ENCODE measurements at regions of chr1 and their contacts with region 1.

Region 1: GRCh38 chr1:182054698-182055326 is 6.7 kb downstream of the ZNF648 start:
- DNase-seq: peak; percentile 24
- H3K4me3 Mint-ChIP-seq: no peak overlapping the region
- H3K27ac Mint-ChIP-seq: no peak overlapping the region
- H3K4me1 Mint-ChIP-seq: peaks cover 7% of the 10 kb centered on the region
- H3K27me3 Mint-ChIP-seq: peaks cover 12% of the 10 kb centered on the region

Region 2: DNA sequence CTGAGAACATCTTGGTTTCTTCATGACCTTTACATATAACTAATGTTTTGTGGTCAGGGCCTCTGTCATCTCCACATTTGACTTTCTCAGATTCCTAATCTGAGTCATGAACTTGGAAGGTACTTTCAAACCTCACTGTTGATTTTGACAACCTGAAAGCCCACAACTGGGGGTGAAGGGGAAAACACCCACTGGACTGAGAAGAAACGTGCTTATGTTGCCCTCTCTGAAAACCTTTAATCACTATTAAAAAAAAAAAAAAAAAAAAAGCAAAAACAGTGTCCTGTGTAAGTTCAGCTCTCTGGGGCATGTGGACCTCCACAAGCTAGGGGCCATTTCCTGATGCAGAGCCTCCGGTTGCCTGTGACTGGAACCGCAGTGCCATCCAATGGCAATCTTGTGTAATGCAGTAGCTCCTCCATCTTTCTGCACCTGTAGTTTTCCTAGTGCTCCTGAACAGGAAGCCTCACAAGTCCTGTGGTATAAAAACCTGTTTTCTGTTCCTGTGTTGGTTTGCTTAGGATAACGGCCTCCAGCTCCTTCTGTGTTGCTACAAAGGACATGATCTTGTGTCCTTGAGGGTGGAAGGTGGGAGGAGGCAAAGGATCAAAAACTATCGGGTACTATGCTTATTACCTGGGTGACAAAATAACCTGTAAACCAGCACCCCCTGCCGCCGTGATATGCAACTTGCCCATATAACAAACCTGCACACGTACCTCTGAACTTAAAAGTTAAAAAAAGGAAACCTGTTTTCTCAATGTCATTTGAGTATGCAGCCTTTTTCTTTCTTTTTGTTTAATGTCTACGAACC is 117.8 kb before region 1 on chr1:
- intact Hi-C with region 1: loop called (anchors 10 kb)
- DNase-seq: peak; percentile 8
- H3K4me3 Mint-ChIP-seq: no peak overlapping the region
- H3K27ac Mint-ChIP-seq: no peak overlapping the region
- H3K4me1 Mint-ChIP-seq: no peaks in the 10 kb centered on the region
- H3K27me3 Mint-ChIP-seq: peaks cover 2% of the 10 kb centered on the region